Naive thymus-derived CD4-positive, alpha-beta T cell (primary cell): ENCODE measurements at regions of chr1 and their contacts with region 1.

Region 1: GRCh38 chr1:64956733-64957441 is 9.5 kb downstream of the JAK1 start:
- DNase-seq: peak in 3 of 9 donors; percentile 25 to 30 (median 29)
- ATAC-seq: peak; percentile 66
- H3K4me3 ChIP-seq: peak overlapping the region; percentile 1
- H3K4me3 Mint-ChIP-seq: no peak overlapping the region
- H3K27ac ChIP-seq: peak overlapping the region; percentile 40
- H3K27ac Mint-ChIP-seq: peak overlapping the region in 1 of 9 donors; percentile 1
- H3K4me1 ChIP-seq: peaks cover 75 to 91% of the 10 kb centered on the region in 2 donors
- H3K4me1 Mint-ChIP-seq: peaks cover 0 to 59% (median 45%) of the 10 kb centered on the region in 7 donors
- H3K27me3 ChIP-seq: no peaks in the 10 kb centered on the region
- H3K27me3 Mint-ChIP-seq: no peaks in the 10 kb centered on the region

Region 2: DNA sequence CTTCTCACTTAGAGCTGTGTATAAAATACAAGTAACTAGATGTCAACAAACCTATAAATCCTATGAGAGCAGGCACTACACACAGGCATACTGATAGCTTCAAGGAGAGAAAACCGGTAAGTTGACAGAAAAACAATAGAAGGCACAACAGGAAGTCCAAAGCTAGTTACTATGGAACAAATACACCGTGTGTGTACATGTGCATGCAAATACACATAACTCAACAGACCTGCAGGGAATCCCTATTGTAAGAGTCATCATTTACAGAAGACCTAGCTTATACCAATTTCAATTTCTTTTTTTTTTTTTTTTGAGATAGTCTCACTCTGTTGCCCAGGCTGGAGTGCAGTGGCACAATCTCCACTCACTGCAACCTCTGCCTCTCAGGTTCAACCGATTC is 16.9 kb before region 1 on chr1:
- CTCF ChIA-PET with region 1: interaction called, 5 read pairs
- POLR2A ChIA-PET with region 1: interaction called, 3 read pairs
- intact Hi-C with region 1: loop called (anchors 2 kb)
- DNase-seq: no peak
- ATAC-seq: peak; percentile 62
- H3K4me3 ChIP-seq: no peak overlapping the region
- H3K4me3 Mint-ChIP-seq: peak overlapping the region in 8 of 10 donors; percentile 39 to 62 (median 50)
- H3K27ac ChIP-seq: no peak overlapping the region
- H3K27ac Mint-ChIP-seq: peak overlapping the region in 4 of 9 donors; percentile 29 to 72 (median 47)
- H3K4me1 ChIP-seq: peaks cover 32 to 43% of the 10 kb centered on the region in 2 donors
- H3K4me1 Mint-ChIP-seq: peaks cover 34 to 92% (median 85%) of the 10 kb centered on the region in 7 donors
- H3K27me3 ChIP-seq: no peaks in the 10 kb centered on the region
- H3K27me3 Mint-ChIP-seq: no peaks in the 10 kb centered on the region